Activated CD4-positive, alpha-beta T cell treated with anti-CD3 and anti-CD28 coated beads for 36 hours (primary cell): ENCODE measurements at regions of chr17 and their contacts with region 1.

Region 1: GRCh38 chr17:7825206-7825990 is 8.6 kb upstream of the KDM6B start:
- DNase-seq: no peak
- ATAC-seq: peak; percentile 72
- H3K4me3 Mint-ChIP-seq: no peak overlapping the region
- H3K27ac Mint-ChIP-seq: no peak overlapping the region
- H3K4me1 Mint-ChIP-seq: peaks cover 3% of the 10 kb centered on the region
- H3K27me3 Mint-ChIP-seq: no peaks in the 10 kb centered on the region

Region 2: GRCh38 chr17:7740481-7741001 is 84.9 kb before region 1 on chr17:
- CTCF ChIA-PET with region 1: interaction called, 4 read pairs
- POLR2A ChIA-PET with region 1: no interaction called
- intact Hi-C with region 1: loop called in 1 of 2 experiments (anchors 5 kb)
- DNase-seq: no peak
- ATAC-seq: no peak
- H3K4me3 Mint-ChIP-seq: no peak overlapping the region
- H3K27ac Mint-ChIP-seq: no peak overlapping the region
- H3K4me1 Mint-ChIP-seq: no peaks in the 10 kb centered on the region
- H3K27me3 Mint-ChIP-seq: peaks cover 10% of the 10 kb centered on the region